Activated CD4-positive, alpha-beta T cell treated with anti-CD3 and anti-CD28 coated beads for 36 hours (primary cell): ENCODE measurements at regions of chr16 and their contacts with region 1.

Region 1: DNA sequence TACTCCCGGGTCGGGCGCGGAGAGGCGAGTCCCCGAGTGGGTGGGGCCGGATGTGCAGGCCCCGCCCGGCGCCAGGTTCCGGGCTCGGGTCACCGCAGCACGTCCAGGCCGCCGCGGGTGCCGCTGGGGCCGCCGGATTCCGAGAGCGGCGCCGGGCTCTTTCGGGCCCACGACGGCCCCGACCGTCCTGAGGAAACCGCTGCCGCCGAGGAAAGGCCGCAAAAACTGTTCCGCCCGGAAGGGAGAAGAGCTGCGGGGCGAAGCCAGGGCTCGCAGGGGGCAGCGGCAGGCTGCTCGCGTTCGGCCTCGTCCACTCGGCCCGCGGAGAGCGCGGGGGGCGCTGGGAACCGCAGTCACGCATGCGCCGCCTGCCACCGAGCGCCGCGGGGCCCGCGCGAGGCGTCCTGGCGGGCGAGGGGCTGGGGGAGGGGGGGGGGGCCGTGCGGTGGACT is at the start of gene ZKSCAN2:
- DNase-seq: peak; percentile 92
- ATAC-seq: peak; percentile 82
- H3K4me3 Mint-ChIP-seq: peak within 1 kb of the TSS; percentile 93
- H3K27ac Mint-ChIP-seq: peak within 1 kb of the TSS; percentile 98
- H3K4me1 Mint-ChIP-seq: peaks cover 59% of the 10 kb centered on the region
- H3K27me3 Mint-ChIP-seq: no peaks in the 10 kb centered on the region
- total RNA-seq, gene ZKSCAN2: 5.5 to 5.6 TPM

Region 2: DNA sequence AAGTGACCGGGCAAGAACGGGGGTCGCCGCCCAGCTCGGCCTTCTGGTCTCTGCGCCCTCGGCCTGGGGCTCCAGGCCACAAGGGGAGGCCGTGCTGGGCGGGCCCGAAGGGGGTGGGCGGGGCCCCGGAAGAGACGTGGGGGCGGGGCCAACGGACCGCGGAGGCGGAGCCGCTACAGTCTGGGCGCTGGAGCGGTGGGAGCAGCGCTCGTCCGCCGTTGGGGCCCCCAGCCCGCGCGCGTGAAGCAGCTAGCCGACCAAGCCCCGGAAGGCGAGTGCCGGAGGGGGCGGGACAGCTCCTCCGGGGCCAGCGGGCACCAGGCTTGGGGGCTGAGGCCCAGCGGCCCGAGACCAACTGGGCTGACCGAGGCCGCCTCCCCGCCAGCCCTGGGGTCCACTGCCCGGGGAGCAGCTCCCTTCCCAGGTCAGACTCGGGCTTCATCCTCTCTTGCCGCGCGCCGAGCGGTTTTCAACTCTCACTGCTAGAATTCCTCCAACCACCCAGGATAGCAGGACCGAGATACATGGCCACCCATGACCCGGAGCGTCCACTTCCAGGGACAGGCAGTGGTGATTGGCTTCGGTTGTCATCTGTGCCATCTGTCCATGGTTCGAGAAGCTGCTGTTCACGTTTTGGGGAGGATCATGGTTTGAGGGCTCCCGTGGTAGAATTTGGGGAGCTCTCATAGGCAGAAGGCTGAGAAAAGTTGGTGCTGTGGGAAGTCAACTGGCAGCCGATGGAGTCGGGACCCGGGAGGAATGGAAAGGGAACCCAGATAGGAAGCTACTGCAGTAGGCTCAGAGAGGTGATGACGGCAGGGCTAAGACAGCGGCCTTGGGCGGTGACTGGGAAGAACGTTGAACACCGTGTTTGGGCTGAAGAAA is 190.5 kb before region 1 on chr16:
- CTCF ChIA-PET with region 1: no interaction called
- POLR2A ChIA-PET with region 1: interaction called, 3 read pairs
- intact Hi-C with region 1: loop called in 1 of 2 experiments (anchors 1 kb)
- DNase-seq: peak; percentile 91
- ATAC-seq: peak; percentile 97
- H3K4me3 Mint-ChIP-seq: peak overlapping the region; percentile 76
- H3K27ac Mint-ChIP-seq: peak overlapping the region; percentile 81
- H3K4me1 Mint-ChIP-seq: peaks cover 38% of the 10 kb centered on the region
- H3K27me3 Mint-ChIP-seq: no peaks in the 10 kb centered on the region